Heart right ventricle (tissue), 16 donors: ENCODE measurements at regions of chr18 and their contacts with region 1.

Region 1: GRCh38 chr18:27185025-27185763 is at the start of gene CHST9:
- DNase-seq: peak; percentile 15 to 39
- ATAC-seq: peak in 7 of 8 donors; percentile 56 to 82 (median 78)
- H3K4me3 ChIP-seq: peak within 1 kb of the TSS; percentile 5 to 65 (median 57)
- H3K27ac ChIP-seq: no peak within 1 kb of the TSS
- H3K4me1 ChIP-seq: peaks cover 0 to 6% (median 0%) of the 10 kb centered on the region in 9 donors
- H3K27me3 ChIP-seq: peaks cover 0 to 26% (median 16%) of the 10 kb centered on the region in 7 donors
- CTCF ChIP-seq: peak in 3 of 9 donors; percentile 5 to 19 (median 7)
- total RNA-seq, gene CHST9: 0.30 to 11.8 (median 4.9) TPM

Region 2: DNA sequence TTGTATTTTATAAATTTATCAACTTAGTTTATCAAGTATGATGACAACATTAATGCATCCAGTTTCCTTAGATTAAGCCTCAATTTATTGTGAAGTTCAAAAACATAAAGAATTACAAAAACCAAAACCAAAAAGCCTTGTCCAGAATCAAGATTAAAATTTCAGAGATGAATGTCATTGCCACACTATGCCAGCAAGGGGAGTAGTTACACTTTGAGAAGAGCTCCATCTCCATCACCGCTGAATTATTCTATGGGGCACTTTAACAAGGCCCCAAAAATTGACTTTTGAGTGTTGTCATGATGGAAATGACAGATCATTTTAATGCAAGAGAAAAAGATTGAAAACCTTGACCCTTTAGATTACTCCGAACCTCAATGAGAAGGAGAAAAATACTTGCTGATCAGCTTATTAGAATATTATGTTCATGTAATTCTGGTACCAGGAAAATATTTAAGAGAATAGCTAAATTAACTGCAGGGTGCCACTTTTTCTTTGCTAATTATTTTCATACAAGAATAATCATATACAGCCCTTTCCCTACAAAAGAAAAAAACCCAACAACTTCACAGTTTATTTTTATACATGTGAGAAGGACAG is 167.2 kb before region 1 on chr18:
- intact Hi-C with region 1: loop called in 1 of 10 experiments (anchors 10 kb)
- DNase-seq: no peak
- ATAC-seq: peak in 2 of 8 donors; percentile 33 to 66
- H3K4me3 ChIP-seq: no peak overlapping the region
- H3K27ac ChIP-seq: no peak overlapping the region
- H3K4me1 ChIP-seq: no peaks in the 10 kb centered on the region
- H3K27me3 ChIP-seq: no peaks in the 10 kb centered on the region
- CTCF ChIP-seq: peak; percentile 13 to 70 (median 58)